ENCODE measurements at regions of chr20 and their contacts with region 1.

Region 1: GRCh38 chr20:35735828-35736470 is 6.1 kb downstream of the RBM39 start:
- DNase-seq: no peak
- H3K4me3 Mint-ChIP-seq: peak overlapping the region; percentile 17
- H3K27ac Mint-ChIP-seq: peak overlapping the region; percentile 79
- H3K4me1 Mint-ChIP-seq: peaks cover 58% of the 10 kb centered on the region
- H3K27me3 Mint-ChIP-seq: no peaks in the 10 kb centered on the region

Region 2: DNA sequence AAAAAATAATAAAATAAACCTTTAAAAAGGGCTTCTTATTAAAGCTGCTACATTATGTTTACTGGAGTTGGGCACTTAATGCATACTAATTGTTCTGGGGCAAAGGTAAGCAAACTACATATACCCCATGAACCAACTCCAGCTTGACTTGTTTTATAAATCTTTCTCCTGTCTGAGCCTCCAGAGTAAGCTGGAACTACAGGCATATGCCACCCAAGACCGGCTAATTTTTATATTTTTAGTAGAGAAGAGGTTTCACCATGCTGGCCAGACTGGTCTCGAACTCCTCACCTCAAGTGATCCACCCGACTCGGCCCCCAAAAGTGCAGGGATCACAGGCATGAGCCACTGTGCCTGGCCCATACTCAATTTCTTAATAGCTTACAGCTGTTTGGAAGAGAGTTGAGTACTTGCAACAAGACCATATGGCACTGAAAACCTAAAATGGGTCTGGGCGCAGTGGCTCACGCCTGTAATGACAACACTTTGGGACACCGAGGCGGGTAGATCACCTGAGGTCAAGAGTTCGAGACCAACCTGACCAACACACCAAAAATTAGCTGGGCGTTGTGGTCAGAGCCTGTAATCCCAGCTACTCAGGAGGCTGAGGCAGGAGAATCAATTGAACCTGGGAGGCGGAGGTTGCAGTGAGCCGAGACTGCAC is 16.8 kb before region 1 on chr20:
- CTCF ChIA-PET with region 1: interaction called, 4 read pairs
- POLR2A ChIA-PET with region 1: interaction called, 13 read pairs
- intact Hi-C with region 1: no loop called
- DNase-seq: no peak
- H3K4me3 Mint-ChIP-seq: no peak overlapping the region
- H3K27ac Mint-ChIP-seq: no peak overlapping the region
- H3K4me1 Mint-ChIP-seq: peaks cover 43% of the 10 kb centered on the region
- H3K27me3 Mint-ChIP-seq: no peaks in the 10 kb centered on the region

Region 3: GRCh38 chr20:35866418-35867197 is 130.7 kb after region 1 on chr20:
- CTCF ChIA-PET with region 1: no interaction called
- POLR2A ChIA-PET with region 1: no interaction called
- intact Hi-C with region 1: no loop called
- DNase-seq: no peak
- H3K4me3 Mint-ChIP-seq: no peak overlapping the region
- H3K27ac Mint-ChIP-seq: no peak overlapping the region
- H3K4me1 Mint-ChIP-seq: peaks cover 2% of the 10 kb centered on the region
- H3K27me3 Mint-ChIP-seq: no peaks in the 10 kb centered on the region

Region 4: DNA sequence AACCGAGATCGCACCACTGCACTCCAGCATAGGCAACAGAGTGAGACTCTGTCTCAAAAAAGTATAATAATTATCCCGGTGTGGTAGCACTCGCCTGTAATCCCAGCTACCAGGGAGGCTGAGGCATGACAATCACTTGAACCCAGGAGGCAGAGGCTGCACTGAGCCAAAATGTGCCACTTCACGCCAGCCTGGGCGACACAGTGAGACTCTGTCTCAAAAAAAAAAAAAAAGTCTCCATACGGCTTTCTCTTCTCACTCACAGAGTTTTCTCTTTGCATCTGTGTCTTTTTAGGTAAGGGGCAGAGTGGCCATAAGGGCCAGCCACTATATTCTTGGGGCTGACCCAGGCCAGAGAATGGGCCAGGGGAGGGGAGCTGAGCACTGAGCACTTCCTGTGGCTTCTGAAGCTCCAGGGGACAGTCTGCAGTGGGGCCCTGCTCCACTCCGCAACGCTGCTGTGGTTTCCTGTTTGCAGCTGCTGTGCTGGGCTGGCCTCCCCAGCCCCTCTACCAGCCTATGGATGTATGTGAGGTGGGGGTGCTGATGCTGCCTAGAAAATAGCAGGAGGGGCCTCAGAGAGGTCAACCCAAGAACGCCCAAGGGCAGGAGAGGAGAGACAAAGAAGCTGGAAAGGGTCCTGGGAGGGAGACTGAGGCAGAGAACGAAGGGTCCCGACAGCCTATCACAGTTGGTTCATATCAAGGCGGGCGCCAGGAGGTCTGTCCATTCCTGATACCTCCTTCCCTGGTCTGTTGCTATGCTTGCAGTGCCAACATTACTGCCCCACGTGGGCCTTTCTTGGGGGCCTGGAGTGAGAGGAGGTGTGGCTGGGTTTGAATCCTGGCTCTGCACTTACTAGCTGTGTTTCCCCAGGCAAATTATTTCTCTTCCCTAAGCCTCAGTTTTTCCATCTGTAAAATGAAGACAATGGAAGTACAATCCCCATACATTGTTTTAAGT is 894.1 kb after region 1 on chr20:
- CTCF ChIA-PET with region 1: no interaction called
- POLR2A ChIA-PET with region 1: no interaction called
- intact Hi-C with region 1: no loop called
- DNase-seq: peak; percentile 76
- H3K4me3 Mint-ChIP-seq: peak overlapping the region; percentile 50
- H3K27ac Mint-ChIP-seq: peak overlapping the region; percentile 88
- H3K4me1 Mint-ChIP-seq: peaks cover 31% of the 10 kb centered on the region
- H3K27me3 Mint-ChIP-seq: no peaks in the 10 kb centered on the region